SK-N-SH (cell line): ENCODE measurements at regions of chr6 and their contacts with region 1.

Region 1: GRCh38 chr6:33944686-33945411 is 141.0 kb upstream of the MLN start:
- DNase-seq: no peak
- H3K4me3 ChIP-seq: no peak overlapping the region
- H3K27ac ChIP-seq: no peak overlapping the region
- H3K4me1 ChIP-seq: no peaks in the 10 kb centered on the region; a peak in 1 of 4 replicates
- H3K27me3 ChIP-seq: peaks cover 35% of the 10 kb centered on the region; the same call in 1 of the 2 replicates
- CTCF ChIP-seq: no peak
- EP300 ChIP-seq: no peak
- RAD21 ChIP-seq: no peak

Region 2: GRCh38 chr6:33851959-33852358 is 92.9 kb before region 1 on chr6:
- CTCF ChIA-PET with region 1: no interaction called
- POLR2A ChIA-PET with region 1: no interaction called
- DNase-seq: no peak
- H3K4me3 ChIP-seq: no peak overlapping the region
- H3K27ac ChIP-seq: no peak overlapping the region
- H3K4me1 ChIP-seq: peaks cover 0 to 4% of the 10 kb centered on the region in 2 experiments; a peak in 1 of 4 replicates
- H3K27me3 ChIP-seq: no peaks in the 10 kb centered on the region
- CTCF ChIP-seq: peak; percentile 55
- EP300 ChIP-seq: no peak
- RAD21 ChIP-seq: peak; percentile 61

Region 3: GRCh38 chr6:33958526-33959333 is 13.9 kb after region 1 on chr6:
- CTCF ChIA-PET with region 1: interaction called, 18 read pairs
- POLR2A ChIA-PET with region 1: no interaction called
- DNase-seq: peak; percentile 56
- H3K4me3 ChIP-seq: no peak overlapping the region; a peak in 1 of 4 replicates
- H3K27ac ChIP-seq: no peak overlapping the region
- H3K4me1 ChIP-seq: peaks cover 0 to 10% of the 10 kb centered on the region in 2 experiments; a peak in 1 of 4 replicates
- H3K27me3 ChIP-seq: no peaks in the 10 kb centered on the region
- CTCF ChIP-seq: peak; percentile 40
- EP300 ChIP-seq: no peak
- RAD21 ChIP-seq: no peak; the same call in 1 of the 2 replicates

Region 4: GRCh38 chr6:33983105-33983716 is 38.4 kb after region 1 on chr6:
- CTCF ChIA-PET with region 1: no interaction called
- POLR2A ChIA-PET with region 1: no interaction called
- DNase-seq: peak; percentile 36
- H3K4me3 ChIP-seq: no peak overlapping the region
- H3K27ac ChIP-seq: no peak overlapping the region
- H3K4me1 ChIP-seq: peaks cover 0 to 5% of the 10 kb centered on the region in 2 experiments; a peak in 1 of 4 replicates
- H3K27me3 ChIP-seq: no peaks in the 10 kb centered on the region; the same call in 1 of the 2 replicates
- CTCF ChIP-seq: no peak
- EP300 ChIP-seq: no peak
- RAD21 ChIP-seq: no peak